ENCODE measurements at regions of chr5 and their contacts with region 1.

Region 1: DNA sequence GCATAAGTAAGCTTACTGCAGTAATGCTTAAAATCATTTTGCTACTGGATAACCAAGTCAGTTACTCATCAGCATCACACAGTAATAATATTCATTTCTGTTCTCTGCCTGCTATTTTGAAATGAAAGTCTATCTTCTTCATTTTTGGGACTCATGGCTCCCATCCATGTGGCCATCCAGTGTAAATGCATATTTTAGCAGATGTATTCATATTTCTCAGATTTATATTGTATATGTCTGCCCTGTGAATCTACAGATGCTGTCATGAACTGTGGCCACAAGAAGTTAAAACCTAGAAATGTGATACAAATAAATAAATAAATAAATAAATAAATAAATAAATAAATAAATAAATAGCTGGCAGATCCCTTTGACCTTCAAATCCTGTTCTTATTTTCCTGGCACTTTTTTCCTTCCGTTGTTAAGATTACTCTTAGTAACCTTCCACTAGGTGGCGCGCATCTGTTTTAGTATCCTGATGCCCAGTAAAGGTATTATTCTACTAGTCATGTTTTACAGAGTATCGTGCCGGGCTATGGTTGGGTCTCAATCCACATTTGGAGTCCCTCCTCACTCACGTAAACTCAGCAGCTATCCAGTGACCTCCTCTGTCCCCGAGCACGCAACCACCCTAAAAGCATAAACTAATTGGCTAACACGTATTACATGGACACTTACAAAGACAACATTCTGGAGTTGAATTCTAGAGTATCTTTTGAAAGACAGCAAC is 79.2 kb upstream of the IL7R start:
- DNase-seq: peak; percentile 40 to 88 (median 81)
- ATAC-seq: peak; percentile 64
- H3K4me3 ChIP-seq: no peak overlapping the region
- H3K4me3 Mint-ChIP-seq: peak overlapping the region; percentile 58
- H3K27ac ChIP-seq: no peak overlapping the region
- H3K27ac Mint-ChIP-seq: peak overlapping the region; percentile 92
- H3K4me1 ChIP-seq: peaks cover 58% of the 10 kb centered on the region
- H3K4me1 Mint-ChIP-seq: peaks cover 68% of the 10 kb centered on the region
- H3K27me3 ChIP-seq: no peaks in the 10 kb centered on the region
- H3K27me3 Mint-ChIP-seq: no peaks in the 10 kb centered on the region
- CTCF ChIP-seq: peak; percentile 79

Region 2: GRCh38 chr5:35794684-35795375 is 17.3 kb after region 1 on chr5:
- CTCF ChIA-PET with region 1: interaction called, 31 read pairs
- POLR2A ChIA-PET with region 1: interaction called, 15 read pairs
- intact Hi-C with region 1: loop called in 1 of 2 experiments (anchors 2 kb)
- DNase-seq: no peak
- ATAC-seq: no peak
- H3K4me3 ChIP-seq: no peak overlapping the region
- H3K4me3 Mint-ChIP-seq: peak overlapping the region; percentile 15
- H3K27ac ChIP-seq: no peak overlapping the region
- H3K27ac Mint-ChIP-seq: peak overlapping the region; percentile 28
- H3K4me1 ChIP-seq: peaks cover 53% of the 10 kb centered on the region
- H3K4me1 Mint-ChIP-seq: peaks cover 74% of the 10 kb centered on the region
- H3K27me3 ChIP-seq: no peaks in the 10 kb centered on the region
- H3K27me3 Mint-ChIP-seq: no peaks in the 10 kb centered on the region
- CTCF ChIP-seq: no peak

Region 3: GRCh38 chr5:35822511-35822910 is 45.0 kb after region 1 on chr5:
- CTCF ChIA-PET with region 1: interaction called, 63 read pairs
- POLR2A ChIA-PET with region 1: interaction called, 48 read pairs
- intact Hi-C with region 1: loop called (anchors 2 to 5 kb)
- DNase-seq: peak; percentile 22 to 84 (median 63)
- ATAC-seq: peak; percentile 74
- H3K4me3 ChIP-seq: no peak overlapping the region
- H3K4me3 Mint-ChIP-seq: peak overlapping the region; percentile 58
- H3K27ac ChIP-seq: peak overlapping the region; percentile 12 to 34
- H3K27ac Mint-ChIP-seq: peak overlapping the region; percentile 94
- H3K4me1 ChIP-seq: peaks cover 93% of the 10 kb centered on the region
- H3K4me1 Mint-ChIP-seq: peaks cover 90% of the 10 kb centered on the region
- H3K27me3 ChIP-seq: no peaks in the 10 kb centered on the region
- H3K27me3 Mint-ChIP-seq: no peaks in the 10 kb centered on the region
- CTCF ChIP-seq: no peak

Region 4: DNA sequence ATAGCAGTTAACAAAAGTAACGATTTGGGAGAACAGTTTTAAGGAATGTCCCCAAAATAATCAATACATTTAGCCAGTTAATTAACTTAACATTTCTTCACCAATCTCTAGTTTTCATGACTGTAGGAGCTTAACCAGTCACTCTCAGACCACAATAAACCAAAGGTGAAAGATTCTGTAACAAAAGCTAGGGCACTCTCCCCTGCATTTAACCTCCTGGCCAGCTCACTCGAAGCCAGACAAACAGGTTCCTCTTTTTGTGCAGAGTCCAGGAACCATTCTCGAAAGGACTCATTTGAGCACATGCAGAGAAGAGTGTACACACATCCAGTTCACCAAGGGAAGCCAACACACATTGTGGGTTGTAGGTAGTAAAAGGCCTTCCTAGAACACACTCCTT is 85.6 kb after region 1 on chr5:
- CTCF ChIA-PET with region 1: interaction called, 144 read pairs
- POLR2A ChIA-PET with region 1: interaction called, 192 read pairs
- intact Hi-C with region 1: loop called in 1 of 2 experiments (anchors 2 kb)
- DNase-seq: peak in 1 of 9 experiments; percentile 22
- ATAC-seq: no peak
- H3K4me3 ChIP-seq: peak overlapping the region; percentile 66 to 80
- H3K4me3 Mint-ChIP-seq: peak overlapping the region; percentile 91
- H3K27ac ChIP-seq: peak overlapping the region; percentile 59 to 97
- H3K27ac Mint-ChIP-seq: peak overlapping the region; percentile 96
- H3K4me1 ChIP-seq: peaks cover 52% of the 10 kb centered on the region
- H3K4me1 Mint-ChIP-seq: peaks cover 76% of the 10 kb centered on the region
- H3K27me3 ChIP-seq: no peaks in the 10 kb centered on the region
- H3K27me3 Mint-ChIP-seq: no peaks in the 10 kb centered on the region
- CTCF ChIP-seq: no peak

Region 5: DNA sequence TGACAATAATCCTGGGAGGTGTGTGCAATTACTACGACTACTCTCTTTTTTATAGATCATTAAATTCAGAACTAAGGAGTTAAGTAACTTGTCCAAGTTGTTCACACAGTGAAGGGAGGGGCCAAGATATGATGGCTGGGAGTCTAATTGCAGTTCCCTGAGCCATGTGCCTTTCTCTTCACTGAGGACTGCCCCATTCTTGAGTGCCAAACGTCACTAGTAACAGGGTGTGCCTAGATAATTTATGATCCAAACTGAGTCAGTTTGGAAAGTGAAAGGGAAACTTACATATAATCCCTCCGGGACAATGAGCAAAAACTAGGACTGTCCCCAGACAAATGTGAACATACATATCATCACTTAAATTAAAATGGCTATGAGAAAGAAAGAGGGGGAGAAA is 99.4 kb after region 1 on chr5:
- CTCF ChIA-PET with region 1: interaction called, 8 read pairs
- POLR2A ChIA-PET with region 1: interaction called, 46 read pairs
- intact Hi-C with region 1: loop called in 1 of 2 experiments (anchors 5 kb)
- DNase-seq: peak in 1 of 9 experiments; percentile 33
- ATAC-seq: no peak
- H3K4me3 ChIP-seq: no peak overlapping the region
- H3K4me3 Mint-ChIP-seq: peak overlapping the region; percentile 46
- H3K27ac ChIP-seq: peak overlapping the region in 1 of 2 experiments; percentile 23
- H3K27ac Mint-ChIP-seq: peak overlapping the region; percentile 87
- H3K4me1 ChIP-seq: peaks cover 65% of the 10 kb centered on the region
- H3K4me1 Mint-ChIP-seq: peaks cover 87% of the 10 kb centered on the region
- H3K27me3 ChIP-seq: no peaks in the 10 kb centered on the region
- H3K27me3 Mint-ChIP-seq: no peaks in the 10 kb centered on the region
- CTCF ChIP-seq: no peak

Region 6: GRCh38 chr5:35919191-35919590 is 141.7 kb after region 1 on chr5:
- CTCF ChIA-PET with region 1: interaction called, 74 read pairs
- POLR2A ChIA-PET with region 1: interaction called, 4 read pairs
- intact Hi-C with region 1: no loop called
- DNase-seq: no peak
- ATAC-seq: no peak
- H3K4me3 ChIP-seq: no peak overlapping the region
- H3K4me3 Mint-ChIP-seq: no peak overlapping the region
- H3K27ac ChIP-seq: no peak overlapping the region
- H3K27ac Mint-ChIP-seq: no peak overlapping the region
- H3K4me1 ChIP-seq: peaks cover 2% of the 10 kb centered on the region
- H3K4me1 Mint-ChIP-seq: peaks cover 24% of the 10 kb centered on the region
- H3K27me3 ChIP-seq: no peaks in the 10 kb centered on the region
- H3K27me3 Mint-ChIP-seq: no peaks in the 10 kb centered on the region
- CTCF ChIP-seq: no peak

Region 7: GRCh38 chr5:36885566-36886485 is 1108.3 kb after region 1 on chr5:
- CTCF ChIA-PET with region 1: no interaction called
- POLR2A ChIA-PET with region 1: no interaction called
- intact Hi-C with region 1: no loop called
- DNase-seq: no peak
- ATAC-seq: no peak
- H3K4me3 ChIP-seq: no peak overlapping the region
- H3K4me3 Mint-ChIP-seq: no peak overlapping the region
- H3K27ac ChIP-seq: no peak overlapping the region
- H3K27ac Mint-ChIP-seq: no peak overlapping the region
- H3K4me1 ChIP-seq: peaks cover 56% of the 10 kb centered on the region
- H3K4me1 Mint-ChIP-seq: peaks cover 78% of the 10 kb centered on the region
- H3K27me3 ChIP-seq: no peaks in the 10 kb centered on the region
- H3K27me3 Mint-ChIP-seq: no peaks in the 10 kb centered on the region
- CTCF ChIP-seq: no peak

Region 8: DNA sequence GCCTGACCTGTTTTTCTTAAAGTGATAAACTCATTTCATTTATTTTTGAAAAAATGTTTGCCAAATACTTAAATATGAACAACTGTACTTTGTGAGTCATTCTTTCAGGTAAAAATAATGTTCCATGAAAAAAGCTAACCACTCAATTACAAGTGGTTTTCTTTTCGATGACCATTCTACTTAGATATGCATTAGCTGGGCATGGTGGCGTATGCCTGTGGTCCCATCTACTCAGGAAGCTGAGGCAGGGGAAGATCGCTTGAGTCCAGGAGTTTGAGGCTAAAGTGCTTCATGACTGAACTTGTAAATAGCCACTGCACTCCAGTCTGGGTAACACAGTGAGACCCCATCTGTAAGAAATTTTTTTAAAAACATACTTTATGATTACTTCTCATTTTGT is 1597.6 kb after region 1 on chr5:
- CTCF ChIA-PET with region 1: no interaction called
- POLR2A ChIA-PET with region 1: no interaction called
- intact Hi-C with region 1: no loop called
- DNase-seq: no peak
- ATAC-seq: no peak
- H3K4me3 ChIP-seq: no peak overlapping the region
- H3K4me3 Mint-ChIP-seq: no peak overlapping the region
- H3K27ac ChIP-seq: no peak overlapping the region
- H3K27ac Mint-ChIP-seq: no peak overlapping the region
- H3K4me1 ChIP-seq: peaks cover 4% of the 10 kb centered on the region
- H3K4me1 Mint-ChIP-seq: peaks cover 21% of the 10 kb centered on the region
- H3K27me3 ChIP-seq: no peaks in the 10 kb centered on the region
- H3K27me3 Mint-ChIP-seq: no peaks in the 10 kb centered on the region
- CTCF ChIP-seq: no peak